ENCODE measurements at regions of chr14 and their contacts with region 1.

Region 1: GRCh38 chr14:32469388-32470160 is 140.5 kb downstream of the AKAP6 start:
- DNase-seq: peak; percentile 47
- H3K4me3 ChIP-seq: no peak overlapping the region
- H3K27me3 ChIP-seq: no peaks in the 10 kb centered on the region
- CTCF ChIP-seq: peak; percentile 47

Region 2: GRCh38 chr14:32259368-32260013 is 210.1 kb before region 1 on chr14:
- CTCF ChIA-PET with region 1: interaction called, 12 read pairs
- POLR2A ChIA-PET with region 1: interaction called, 8 read pairs
- DNase-seq: peak; percentile 46
- H3K4me3 ChIP-seq: no peak overlapping the region
- H3K27me3 ChIP-seq: no peaks in the 10 kb centered on the region
- CTCF ChIP-seq: no peak